Activated CD4-positive, alpha-beta T cell treated with anti-CD3 and anti-CD28 coated beads, Interleukin-2, amount 10 ng/mL, durations not matched to agents 24 days and 14 days (primary cell): ENCODE measurements at regions of chr18 and their contacts with region 1.

Region 1: DNA sequence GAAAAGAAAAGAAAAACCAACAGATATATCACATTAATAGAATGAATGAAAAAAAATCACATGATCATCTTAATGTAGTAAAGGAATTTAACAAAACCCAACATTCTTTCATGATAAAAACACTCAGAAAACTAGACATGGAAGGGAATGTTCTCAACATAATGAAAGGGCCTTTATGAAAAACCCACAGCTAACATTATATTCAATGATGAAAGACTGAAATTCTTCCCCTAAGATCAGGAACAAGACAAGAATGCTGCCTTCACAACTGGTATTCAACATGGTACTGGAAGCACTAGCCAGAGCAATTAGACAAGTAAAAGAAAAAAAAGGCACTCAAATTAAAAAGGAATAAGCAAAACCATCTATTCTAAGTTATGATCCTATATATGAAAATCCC is 28.5 kb upstream of the EMILIN2 start:
- DNase-seq: no peak
- H3K4me3 Mint-ChIP-seq: no peak overlapping the region
- H3K27ac Mint-ChIP-seq: no peak overlapping the region
- H3K4me1 Mint-ChIP-seq: no peaks in the 10 kb centered on the region
- H3K27me3 Mint-ChIP-seq: peaks cover 9% of the 10 kb centered on the region

Region 2: GRCh38 chr18:3151399-3152264 is 333.4 kb after region 1 on chr18:
- intact Hi-C with region 1: loop called (anchors 10 kb)
- DNase-seq: peak; percentile 64
- H3K4me3 Mint-ChIP-seq: no peak overlapping the region
- H3K27ac Mint-ChIP-seq: no peak overlapping the region
- H3K4me1 Mint-ChIP-seq: peaks cover 6% of the 10 kb centered on the region
- H3K27me3 Mint-ChIP-seq: peaks cover 6% of the 10 kb centered on the region